Heart left ventricle (tissue), 16 donors: ENCODE measurements at regions of chr20 and their contacts with region 1.

Region 1: GRCh38 chr20:9609887-9610502 is 95.6 kb downstream of the LAMP5 start:
- DNase-seq: peak in 4 of 5 donors; percentile 28 to 47 (median 36)
- ATAC-seq: no peak
- H3K4me3 ChIP-seq: no peak overlapping the region
- H3K27ac ChIP-seq: no peak overlapping the region
- H3K4me1 ChIP-seq: no peaks in the 10 kb centered on the region
- H3K27me3 ChIP-seq: peaks cover 0 to 13% (median 0%) of the 10 kb centered on the region in 9 donors
- CTCF ChIP-seq: peak; percentile 55 to 81 (median 73)
- POLR2A ChIP-seq: no peak

Region 2: DNA sequence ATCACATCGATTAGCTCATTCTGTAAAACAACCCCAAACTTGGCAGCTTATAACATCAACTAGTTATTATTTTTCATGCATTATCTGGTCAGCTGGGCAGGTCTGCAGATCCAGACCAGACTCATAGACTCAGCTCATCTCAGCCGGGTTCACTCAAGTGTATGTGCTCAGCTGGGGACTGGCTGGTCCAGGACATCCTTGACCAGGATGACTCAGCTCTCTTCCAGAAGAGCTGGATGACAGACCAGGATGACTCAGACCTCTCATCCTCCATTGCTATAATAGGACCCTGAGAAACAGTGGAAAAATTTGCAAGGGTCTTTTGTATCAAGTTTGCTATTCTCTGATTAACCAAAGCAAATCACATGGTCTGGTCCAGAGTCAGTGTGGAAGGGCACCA is 853.6 kb before region 1 on chr20:
- intact Hi-C with region 1: loop called in 6 of 10 experiments (anchors 5 to 10 kb)
- DNase-seq: peak in 1 of 5 donors; percentile 50
- ATAC-seq: peak in 2 of 4 donors; percentile 86 to 90
- H3K4me3 ChIP-seq: no peak overlapping the region
- H3K27ac ChIP-seq: no peak overlapping the region
- H3K4me1 ChIP-seq: peaks cover 0 to 16% (median 0%) of the 10 kb centered on the region in 12 donors
- H3K27me3 ChIP-seq: no peaks in the 10 kb centered on the region
- CTCF ChIP-seq: no peak
- POLR2A ChIP-seq: no peak

Region 3: DNA sequence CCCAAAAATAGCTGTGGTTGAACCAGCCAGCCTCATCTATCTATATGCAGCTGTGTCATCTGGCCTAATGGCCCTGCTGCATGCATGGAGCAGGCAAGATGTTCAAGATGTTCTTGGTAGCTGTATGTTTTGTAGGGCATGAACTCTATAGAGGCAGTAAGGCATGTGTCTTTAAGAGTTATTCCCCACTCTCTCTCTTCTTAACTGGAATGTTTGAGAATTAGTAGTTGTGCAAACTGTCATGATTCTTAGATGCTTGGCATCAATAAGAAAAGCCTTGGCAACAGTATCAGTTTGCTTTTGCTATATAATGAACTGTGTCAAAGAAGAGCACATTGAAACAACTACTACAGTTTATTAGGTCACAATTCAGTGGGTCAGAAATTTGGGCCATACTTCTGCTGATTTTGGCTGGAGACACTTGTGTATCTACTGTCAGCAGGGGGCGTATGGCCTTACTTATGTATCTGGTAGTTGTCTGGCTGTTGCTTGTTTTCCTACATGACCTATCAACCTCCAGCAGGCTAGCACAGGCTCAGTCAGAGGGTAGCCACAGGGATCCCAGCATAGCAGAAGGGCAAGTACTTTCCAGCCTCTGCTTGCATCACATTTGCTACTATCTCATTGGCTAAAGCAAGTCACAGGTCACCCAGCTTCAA is 151.7 kb before region 1 on chr20:
- intact Hi-C with region 1: loop called in 1 of 10 experiments (anchors 10 kb)
- DNase-seq: no peak
- ATAC-seq: no peak
- H3K4me3 ChIP-seq: no peak overlapping the region
- H3K27ac ChIP-seq: no peak overlapping the region
- H3K4me1 ChIP-seq: peaks cover 0 to 11% (median 0%) of the 10 kb centered on the region in 12 donors
- H3K27me3 ChIP-seq: no peaks in the 10 kb centered on the region
- CTCF ChIP-seq: peak in 3 of 12 donors; percentile 12 to 22 (median 21)
- POLR2A ChIP-seq: no peak

Region 4: DNA sequence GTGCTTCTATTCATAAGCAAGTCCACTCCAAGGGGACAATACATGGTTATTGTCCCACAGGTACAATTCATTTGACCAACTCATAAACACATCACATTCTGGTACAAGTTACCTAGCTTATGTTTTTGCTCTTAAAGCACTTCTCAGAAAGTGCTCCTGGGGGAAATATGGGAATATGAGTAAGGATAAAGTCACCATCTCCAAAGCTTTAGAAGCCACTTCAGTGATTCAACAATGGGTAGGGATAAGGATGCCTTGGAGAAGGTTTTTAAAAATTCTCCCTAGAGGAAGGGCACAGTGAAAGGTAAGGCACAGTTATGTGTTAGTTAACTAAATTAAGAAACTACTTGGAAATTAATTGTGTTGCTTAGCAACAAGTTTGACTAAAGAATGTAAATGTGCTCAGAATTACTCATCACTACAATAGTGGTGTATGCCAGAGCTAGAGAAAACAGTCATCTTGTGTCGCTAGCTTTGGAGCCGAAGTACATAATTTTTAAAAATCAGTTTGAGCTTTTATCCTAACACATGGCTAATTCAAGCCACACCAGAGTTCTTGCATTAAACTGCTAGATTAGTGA is 135.1 kb before region 1 on chr20:
- intact Hi-C with region 1: loop called in 1 of 10 experiments (anchors 10 kb)
- DNase-seq: no peak
- ATAC-seq: no peak
- H3K4me3 ChIP-seq: no peak overlapping the region
- H3K27ac ChIP-seq: no peak overlapping the region
- H3K4me1 ChIP-seq: no peaks in the 10 kb centered on the region
- H3K27me3 ChIP-seq: no peaks in the 10 kb centered on the region
- CTCF ChIP-seq: no peak
- POLR2A ChIP-seq: no peak

Region 5: DNA sequence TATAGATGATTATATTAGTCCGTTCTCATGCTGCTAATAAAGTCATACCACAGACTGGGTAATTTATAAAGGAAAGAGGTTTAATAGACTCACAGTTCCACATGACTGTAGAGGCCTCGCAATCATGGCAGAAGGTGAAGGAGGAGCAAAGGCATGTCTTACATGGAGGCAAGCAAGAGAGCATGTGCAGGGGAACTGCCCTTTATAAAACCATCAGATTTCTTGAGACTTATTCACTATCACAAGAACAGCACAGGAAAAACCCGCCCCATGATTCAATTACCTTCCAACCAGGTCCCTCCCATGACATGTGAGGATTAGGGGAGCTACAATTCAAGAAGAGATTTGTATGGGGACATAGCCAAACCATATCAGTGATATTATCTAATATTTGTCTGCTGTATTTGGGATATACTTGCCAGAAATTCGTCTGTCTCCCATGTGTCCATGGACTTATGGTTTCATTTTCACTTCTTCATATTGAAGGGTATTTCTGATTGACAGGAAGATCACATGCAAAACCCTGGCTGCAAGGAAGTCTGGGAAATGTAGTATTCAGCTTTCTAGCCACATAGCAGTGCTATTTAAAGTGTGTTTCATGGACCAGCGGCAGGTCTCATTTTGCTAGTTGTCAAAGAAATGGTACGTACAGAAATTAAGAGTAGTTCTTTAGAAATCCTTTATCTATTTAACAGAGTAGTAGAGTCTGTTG is 279.4 kb after region 1 on chr20:
- intact Hi-C with region 1: no loop called
- DNase-seq: no peak
- ATAC-seq: no peak
- H3K4me3 ChIP-seq: peak overlapping the region in 1 of 12 donors; percentile 5
- H3K27ac ChIP-seq: no peak overlapping the region
- H3K4me1 ChIP-seq: no peaks in the 10 kb centered on the region
- H3K27me3 ChIP-seq: peaks cover 0 to 4% (median 0%) of the 10 kb centered on the region in 9 donors
- CTCF ChIP-seq: no peak
- POLR2A ChIP-seq: no peak